ENCODE measurements at regions of chr22 and their contacts with region 1.

Region 1: GRCh38 chr22:40645579-40646197 is 9.2 kb upstream of the MRTFA start:
- DNase-seq: no peak
- ATAC-seq: no peak
- H3K4me3 ChIP-seq: peak overlapping the region in 1 of 2 experiments; percentile 24
- H3K4me3 Mint-ChIP-seq: no peak overlapping the region
- H3K27ac ChIP-seq: no peak overlapping the region
- H3K27ac Mint-ChIP-seq: no peak overlapping the region
- H3K4me1 ChIP-seq: no peaks in the 10 kb centered on the region
- H3K4me1 Mint-ChIP-seq: peaks cover 7% of the 10 kb centered on the region
- H3K27me3 ChIP-seq: no peaks in the 10 kb centered on the region
- H3K27me3 Mint-ChIP-seq: no peaks in the 10 kb centered on the region
- CTCF ChIP-seq: no peak

Region 2: DNA sequence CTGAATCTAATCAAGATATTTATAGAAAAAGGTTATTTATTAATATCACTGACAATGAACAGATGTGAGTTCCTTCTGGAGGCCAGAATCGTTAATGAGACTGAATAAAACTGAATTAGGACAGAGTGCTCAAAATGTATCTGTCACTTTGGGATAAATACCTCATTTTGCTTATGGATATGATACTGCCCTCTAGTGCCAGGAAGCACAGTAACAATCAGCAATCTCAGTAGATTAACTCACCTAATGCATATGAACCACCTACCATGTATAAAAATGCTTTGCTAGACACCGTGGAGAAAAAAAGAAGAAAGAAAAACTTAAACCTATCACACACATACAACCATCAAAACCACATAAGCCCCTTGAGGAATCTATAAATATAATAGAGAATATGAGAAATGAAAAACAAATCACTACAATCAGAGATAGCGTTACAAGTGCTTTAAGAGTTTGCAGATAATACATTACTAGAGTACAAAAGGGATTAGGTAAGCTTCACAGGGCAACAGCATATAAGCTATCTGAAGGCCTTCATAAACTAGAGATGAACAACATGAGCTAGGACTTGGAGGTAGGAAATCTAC is 157.9 kb before region 1 on chr22:
- CTCF ChIA-PET with region 1: interaction called, 43 read pairs
- POLR2A ChIA-PET with region 1: no interaction called
- intact Hi-C with region 1: loop called in 1 of 2 experiments (anchors 2 kb)
- DNase-seq: peak in 2 of 9 experiments; percentile 44 to 65
- ATAC-seq: peak; percentile 53
- H3K4me3 ChIP-seq: no peak overlapping the region
- H3K4me3 Mint-ChIP-seq: no peak overlapping the region
- H3K27ac ChIP-seq: no peak overlapping the region
- H3K27ac Mint-ChIP-seq: no peak overlapping the region
- H3K4me1 ChIP-seq: peaks cover 31% of the 10 kb centered on the region
- H3K4me1 Mint-ChIP-seq: peaks cover 43% of the 10 kb centered on the region
- H3K27me3 ChIP-seq: no peaks in the 10 kb centered on the region
- H3K27me3 Mint-ChIP-seq: no peaks in the 10 kb centered on the region
- CTCF ChIP-seq: peak; percentile 95

Region 3: DNA sequence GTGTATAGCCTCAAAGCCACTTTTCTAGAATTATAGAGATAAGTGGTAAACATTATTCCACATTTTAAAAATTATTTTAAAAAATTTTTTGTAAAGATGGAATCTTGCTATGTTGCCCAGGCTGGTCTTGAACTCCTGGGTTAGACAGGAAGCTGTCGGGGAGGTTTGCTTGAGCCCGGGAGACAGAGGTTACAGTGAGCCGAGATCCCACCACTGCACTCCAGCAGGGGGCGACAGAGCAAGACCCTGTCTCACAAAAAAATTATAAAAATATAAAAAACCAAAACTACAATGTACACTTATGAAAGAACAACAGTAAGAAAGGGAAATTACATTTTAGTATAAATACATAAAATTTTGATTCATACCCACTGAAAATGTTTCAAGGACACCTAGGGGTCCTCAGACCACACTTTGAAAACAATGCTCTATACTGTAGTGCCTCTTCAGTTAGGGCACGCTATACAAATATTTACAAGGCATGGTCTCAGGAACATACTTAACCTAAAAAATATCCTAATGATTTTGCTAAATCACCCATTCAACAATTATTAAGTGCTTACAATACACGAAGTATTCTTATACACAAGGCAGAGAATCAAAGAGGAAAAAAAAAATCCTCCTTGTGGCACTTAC is 120.3 kb before region 1 on chr22:
- CTCF ChIA-PET with region 1: interaction called, 89 read pairs
- POLR2A ChIA-PET with region 1: interaction called, 3 read pairs
- intact Hi-C with region 1: loop called (anchors 1 kb)
- DNase-seq: peak; percentile 50 to 83 (median 76)
- ATAC-seq: peak; percentile 82
- H3K4me3 ChIP-seq: no peak overlapping the region
- H3K4me3 Mint-ChIP-seq: no peak overlapping the region
- H3K27ac ChIP-seq: no peak overlapping the region
- H3K27ac Mint-ChIP-seq: no peak overlapping the region
- H3K4me1 ChIP-seq: peaks cover 5% of the 10 kb centered on the region
- H3K4me1 Mint-ChIP-seq: peaks cover 42% of the 10 kb centered on the region
- H3K27me3 ChIP-seq: no peaks in the 10 kb centered on the region
- H3K27me3 Mint-ChIP-seq: no peaks in the 10 kb centered on the region
- CTCF ChIP-seq: peak; percentile 84

Region 4: GRCh38 chr22:40533712-40534378 is 111.8 kb before region 1 on chr22:
- CTCF ChIA-PET with region 1: interaction called, 89 read pairs
- POLR2A ChIA-PET with region 1: interaction called, 3 read pairs
- intact Hi-C with region 1: no loop called
- DNase-seq: peak; percentile 6 to 86 (median 58)
- ATAC-seq: peak; percentile 98
- H3K4me3 ChIP-seq: peak overlapping the region; percentile 46 to 48
- H3K4me3 Mint-ChIP-seq: peak overlapping the region; percentile 82
- H3K27ac ChIP-seq: peak overlapping the region; percentile 19 to 63
- H3K27ac Mint-ChIP-seq: peak overlapping the region; percentile 87
- H3K4me1 ChIP-seq: peaks cover 41% of the 10 kb centered on the region
- H3K4me1 Mint-ChIP-seq: peaks cover 63% of the 10 kb centered on the region
- H3K27me3 ChIP-seq: no peaks in the 10 kb centered on the region
- H3K27me3 Mint-ChIP-seq: no peaks in the 10 kb centered on the region
- CTCF ChIP-seq: no peak

Region 5: DNA sequence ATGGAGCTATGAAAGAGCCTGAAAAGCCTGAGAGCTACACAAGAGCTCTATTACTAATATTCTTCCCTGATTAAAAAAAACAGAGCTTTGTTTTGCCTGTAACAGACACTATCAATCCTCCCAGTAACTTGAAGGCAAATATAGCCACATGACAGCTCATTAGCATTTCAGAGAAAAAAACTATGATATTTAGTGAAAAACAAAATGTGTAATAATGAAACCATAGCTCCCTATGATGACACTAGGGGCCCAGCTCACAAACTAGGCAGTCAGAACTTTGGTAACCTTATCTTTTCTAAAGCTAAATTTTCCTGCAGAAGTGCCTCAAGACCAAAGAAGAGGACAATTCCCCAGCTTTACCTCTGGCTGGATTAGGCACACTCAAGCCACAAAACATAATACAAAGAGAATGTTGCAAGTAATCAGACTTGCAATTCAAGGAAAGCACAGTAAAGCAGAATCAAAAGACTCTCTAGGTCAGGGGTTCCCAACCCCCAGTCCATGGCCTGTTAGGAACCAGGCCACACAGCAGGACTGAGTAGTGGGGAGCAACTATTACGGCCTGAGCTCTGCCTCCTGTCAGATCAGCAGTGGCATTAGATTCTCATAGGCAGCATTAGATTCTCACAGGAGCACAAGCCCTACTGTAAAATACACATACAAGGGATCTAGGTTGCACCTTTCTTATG is 62.5 kb before region 1 on chr22:
- CTCF ChIA-PET with region 1: interaction called, 12 read pairs
- POLR2A ChIA-PET with region 1: no interaction called
- intact Hi-C with region 1: no loop called
- DNase-seq: no peak
- ATAC-seq: no peak
- H3K4me3 ChIP-seq: no peak overlapping the region
- H3K4me3 Mint-ChIP-seq: no peak overlapping the region
- H3K27ac ChIP-seq: no peak overlapping the region
- H3K27ac Mint-ChIP-seq: peak overlapping the region; percentile 38
- H3K4me1 ChIP-seq: peaks cover 7% of the 10 kb centered on the region
- H3K4me1 Mint-ChIP-seq: peaks cover 25% of the 10 kb centered on the region
- H3K27me3 ChIP-seq: no peaks in the 10 kb centered on the region
- H3K27me3 Mint-ChIP-seq: no peaks in the 10 kb centered on the region
- CTCF ChIP-seq: no peak

Region 6: GRCh38 chr22:40628354-40629042 is 17.2 kb before region 1 on chr22:
- CTCF ChIA-PET with region 1: interaction called, 40 read pairs
- POLR2A ChIA-PET with region 1: no interaction called
- intact Hi-C with region 1: no loop called
- DNase-seq: no peak
- ATAC-seq: no peak
- H3K4me3 ChIP-seq: no peak overlapping the region
- H3K4me3 Mint-ChIP-seq: no peak overlapping the region
- H3K27ac ChIP-seq: no peak overlapping the region
- H3K27ac Mint-ChIP-seq: no peak overlapping the region
- H3K4me1 ChIP-seq: peaks cover 6% of the 10 kb centered on the region
- H3K4me1 Mint-ChIP-seq: peaks cover 62% of the 10 kb centered on the region
- H3K27me3 ChIP-seq: no peaks in the 10 kb centered on the region
- H3K27me3 Mint-ChIP-seq: no peaks in the 10 kb centered on the region
- CTCF ChIP-seq: no peak

Region 7: GRCh38 chr22:40764763-40765441 is 119.2 kb after region 1 on chr22:
- CTCF ChIA-PET with region 1: interaction called, 6 read pairs
- POLR2A ChIA-PET with region 1: no interaction called
- intact Hi-C with region 1: loop called in 1 of 2 experiments (anchors 1 kb)
- DNase-seq: peak in 6 of 9 experiments; percentile 7 to 52 (median 20)
- ATAC-seq: peak; percentile 67
- H3K4me3 ChIP-seq: no peak overlapping the region
- H3K4me3 Mint-ChIP-seq: peak overlapping the region; percentile 17
- H3K27ac ChIP-seq: peak overlapping the region; percentile 21 to 53
- H3K27ac Mint-ChIP-seq: peak overlapping the region; percentile 89
- H3K4me1 ChIP-seq: peaks cover 12% of the 10 kb centered on the region
- H3K4me1 Mint-ChIP-seq: peaks cover 16% of the 10 kb centered on the region
- H3K27me3 ChIP-seq: no peaks in the 10 kb centered on the region
- H3K27me3 Mint-ChIP-seq: no peaks in the 10 kb centered on the region
- CTCF ChIP-seq: no peak